ENCODE measurements at regions of chr7 and their contacts with region 1.

Region 1: GRCh38 chr7:141675436-141676215 is 26.3 kb downstream of the DENND11 start:
- DNase-seq: no peak
- ATAC-seq: no peak
- H3K4me3 ChIP-seq: no peak overlapping the region
- H3K27ac ChIP-seq: peak overlapping the region; percentile 82
- H3K4me1 ChIP-seq: peaks cover 29% of the 10 kb centered on the region
- H3K27me3 ChIP-seq: no peaks in the 10 kb centered on the region
- CTCF ChIP-seq: no peak

Region 2: DNA sequence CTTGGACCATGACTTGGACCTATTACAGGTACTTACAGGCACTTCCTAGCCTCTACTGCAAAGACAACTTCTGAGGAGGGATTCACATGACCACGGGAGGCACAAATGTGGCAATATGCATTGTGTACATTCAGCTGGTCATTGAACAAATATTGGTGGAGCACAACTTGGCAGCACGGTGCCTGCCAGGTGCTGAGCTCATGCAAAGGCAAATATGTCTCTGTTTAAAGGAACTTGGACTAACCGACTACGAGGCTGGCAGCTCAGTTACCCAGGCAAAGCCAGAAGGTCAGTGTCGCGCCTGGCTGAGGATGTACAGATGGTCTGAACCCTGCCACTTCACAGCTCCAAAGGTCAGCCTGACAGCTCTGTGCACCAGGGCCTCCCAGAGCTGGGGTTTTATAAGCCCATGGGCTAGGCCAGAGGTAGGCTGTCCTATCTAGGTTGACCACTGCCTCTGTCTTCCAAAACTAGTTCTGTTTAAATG is 20.2 kb after region 1 on chr7:
- CTCF ChIA-PET with region 1: no interaction called
- POLR2A ChIA-PET with region 1: no interaction called
- intact Hi-C with region 1: loop called (anchors 1 kb)
- DNase-seq: peak; percentile 91
- ATAC-seq: peak; percentile 86
- H3K4me3 ChIP-seq: no peak overlapping the region
- H3K27ac ChIP-seq: peak overlapping the region; percentile 86
- H3K4me1 ChIP-seq: peaks cover 42% of the 10 kb centered on the region
- H3K27me3 ChIP-seq: no peaks in the 10 kb centered on the region
- CTCF ChIP-seq: no peak

Region 3: DNA sequence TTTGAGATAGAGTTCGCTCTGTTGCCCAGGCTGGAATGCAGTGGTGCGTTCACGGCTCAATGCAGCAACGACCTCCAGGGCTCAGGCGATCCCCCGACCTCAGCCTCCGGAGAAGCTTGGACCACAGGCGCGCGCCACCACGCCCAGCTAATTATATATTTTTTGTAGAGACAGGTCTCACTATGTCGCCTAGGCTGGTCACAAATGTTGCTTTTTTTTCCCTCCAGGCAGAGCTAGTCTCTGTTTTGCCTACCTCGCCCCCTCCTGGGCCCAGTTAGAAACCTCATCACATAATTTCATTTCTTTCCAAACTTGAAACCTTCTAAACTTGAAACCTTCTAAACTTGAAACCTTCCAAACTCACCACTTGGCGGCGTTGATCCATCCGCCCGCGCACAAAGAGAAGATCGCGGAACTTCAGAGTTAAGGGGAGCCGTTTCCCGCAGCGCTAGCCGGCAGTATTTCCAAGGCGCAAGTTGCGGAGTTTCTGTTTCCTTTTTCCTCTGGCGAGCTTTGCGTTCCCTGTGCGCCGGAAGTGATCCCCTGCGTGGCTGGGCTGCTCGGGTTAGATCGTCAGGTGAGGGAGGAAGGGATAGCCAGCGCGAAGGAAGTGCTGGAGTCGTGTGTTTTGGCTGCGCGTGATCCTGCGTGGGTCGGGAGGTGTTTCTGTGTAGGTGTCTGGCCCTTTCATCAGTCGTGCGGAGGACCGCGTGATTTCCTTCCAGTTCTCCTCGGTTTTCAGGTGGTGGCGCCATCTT is 62.4 kb after region 1 on chr7 and contains the start of gene SSBP1:
- CTCF ChIA-PET with region 1: no interaction called
- POLR2A ChIA-PET with region 1: no interaction called
- intact Hi-C with region 1: no loop called
- DNase-seq: peak; percentile 95
- ATAC-seq: peak; percentile 86
- H3K4me3 ChIP-seq: peak within 1 kb of the TSS; percentile 94
- H3K27ac ChIP-seq: peak within 1 kb of the TSS; percentile 57
- H3K4me1 ChIP-seq: peaks cover 20% of the 10 kb centered on the region
- H3K27me3 ChIP-seq: no peaks in the 10 kb centered on the region
- CTCF ChIP-seq: peak; percentile 88
- total RNA-seq, gene SSBP1: 212 and 269 TPM in 2 replicates